Tibial artery (tissue), 4 donors: ENCODE measurements at regions of chr9 and their contacts with region 1.

Region 1: DNA sequence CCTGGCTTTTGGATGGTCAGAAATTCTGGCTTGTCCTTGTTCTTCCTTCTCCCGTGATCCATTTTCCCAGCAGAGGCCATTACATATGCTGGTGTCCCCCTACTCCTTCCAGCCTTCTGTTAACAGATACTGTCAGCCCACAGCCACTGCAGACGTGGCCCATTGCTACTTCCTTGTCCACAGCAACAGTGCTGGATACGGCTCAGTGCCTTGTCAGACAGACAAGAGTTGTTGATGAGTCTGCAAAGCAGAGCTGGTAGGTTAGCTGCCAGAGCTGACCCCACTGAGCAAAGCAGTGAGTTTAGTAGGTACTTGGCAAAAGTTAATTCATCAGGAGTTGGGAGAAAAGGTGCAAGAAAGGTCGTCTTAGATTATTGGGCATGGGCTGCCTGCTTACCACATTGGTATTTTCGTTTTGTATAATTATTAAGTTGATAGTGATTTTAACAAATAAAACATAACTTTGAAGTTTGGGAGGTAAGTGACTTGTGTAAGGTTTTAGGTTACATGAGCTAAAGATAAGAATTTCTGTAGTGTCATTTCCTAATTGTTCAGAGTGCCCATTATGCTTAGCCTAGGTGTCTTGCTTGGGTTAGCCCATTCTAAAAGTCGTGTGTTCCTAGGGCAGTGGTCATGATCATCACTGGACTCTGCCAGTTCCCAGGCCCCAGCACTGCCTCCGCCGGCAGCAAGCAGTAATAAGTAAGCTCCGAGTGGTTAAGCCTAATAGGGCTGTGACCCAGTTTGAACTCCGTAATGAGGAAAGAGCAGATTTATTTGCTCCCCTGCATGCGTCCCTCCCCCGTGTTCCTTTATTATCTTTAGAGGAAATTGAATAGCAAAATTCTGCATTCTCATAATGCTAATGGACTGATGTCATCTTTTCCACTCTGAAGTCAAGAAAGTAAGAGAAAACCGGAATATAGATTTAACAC is 292.0 kb downstream of the FANCC start:
- DNase-seq: peak; percentile 79 to 89
- H3K4me3 ChIP-seq: peak overlapping the region; percentile 1 to 18
- H3K27ac ChIP-seq: peak overlapping the region; percentile 81 to 99
- H3K4me1 ChIP-seq: peaks cover 0 to 100% (median 84%) of the 10 kb centered on the region in 4 donors
- H3K27me3 ChIP-seq: no peaks in the 10 kb centered on the region
- CTCF ChIP-seq: peak; percentile 50

Region 2: GRCh38 chr9:95044712-95045508 is 19.4 kb after region 1 on chr9:
- intact Hi-C with region 1: loop called (anchors 2 kb)
- DNase-seq: peak in 1 of 2 donors; percentile 70
- H3K4me3 ChIP-seq: no peak overlapping the region
- H3K27ac ChIP-seq: peak overlapping the region; percentile 29 to 93
- H3K4me1 ChIP-seq: peaks cover 0 to 86% (median 32%) of the 10 kb centered on the region in 4 donors
- H3K27me3 ChIP-seq: no peaks in the 10 kb centered on the region
- CTCF ChIP-seq: peak in 1 of 2 experiments; percentile 12